Cardiac septum (tissue), 1 donor: ENCODE measurements at regions of chr14 and their contacts with region 1.

Region 1: GRCh38 chr14:64986578-64987571 is at the start of gene FNTB:
- DNase-seq: peak; percentile 99
- total RNA-seq, gene FNTB: 18.7 TPM

Region 2: DNA sequence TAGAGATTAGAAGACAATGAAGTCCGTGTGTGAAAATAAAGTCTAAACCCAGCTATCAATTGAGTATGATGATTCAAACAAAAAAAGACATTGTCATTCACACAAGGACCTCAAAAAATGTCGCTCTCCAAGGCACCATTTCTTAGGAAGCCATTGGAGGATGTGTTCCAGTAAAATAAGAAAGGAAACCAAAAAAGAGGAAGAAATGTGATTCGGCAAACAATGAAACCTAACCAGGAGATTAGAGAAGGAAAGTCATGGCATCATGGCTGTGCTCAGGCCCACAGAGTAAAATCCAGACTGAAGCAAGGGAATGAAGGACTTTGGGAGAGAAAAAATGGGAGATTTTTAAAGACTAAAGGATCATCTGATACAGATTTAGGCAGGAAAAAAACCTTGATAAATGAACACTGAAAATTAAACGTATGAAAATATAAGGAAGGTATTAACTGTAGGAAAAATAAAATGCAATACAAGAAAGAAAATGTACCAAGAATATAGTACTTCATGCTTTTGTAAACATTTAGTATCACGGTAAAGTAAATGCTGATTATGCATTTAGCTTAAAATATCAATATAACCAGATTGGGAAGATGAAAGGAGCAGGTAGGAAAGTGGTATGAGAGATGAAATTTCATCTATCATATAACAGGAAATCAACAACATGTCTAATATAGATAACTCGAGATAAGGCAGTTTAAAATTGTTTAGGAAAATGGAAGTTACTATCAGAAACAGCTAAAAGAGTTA is 637.0 kb before region 1 on chr14:
- intact Hi-C with region 1: no loop called
- DNase-seq: no peak

Region 3: DNA sequence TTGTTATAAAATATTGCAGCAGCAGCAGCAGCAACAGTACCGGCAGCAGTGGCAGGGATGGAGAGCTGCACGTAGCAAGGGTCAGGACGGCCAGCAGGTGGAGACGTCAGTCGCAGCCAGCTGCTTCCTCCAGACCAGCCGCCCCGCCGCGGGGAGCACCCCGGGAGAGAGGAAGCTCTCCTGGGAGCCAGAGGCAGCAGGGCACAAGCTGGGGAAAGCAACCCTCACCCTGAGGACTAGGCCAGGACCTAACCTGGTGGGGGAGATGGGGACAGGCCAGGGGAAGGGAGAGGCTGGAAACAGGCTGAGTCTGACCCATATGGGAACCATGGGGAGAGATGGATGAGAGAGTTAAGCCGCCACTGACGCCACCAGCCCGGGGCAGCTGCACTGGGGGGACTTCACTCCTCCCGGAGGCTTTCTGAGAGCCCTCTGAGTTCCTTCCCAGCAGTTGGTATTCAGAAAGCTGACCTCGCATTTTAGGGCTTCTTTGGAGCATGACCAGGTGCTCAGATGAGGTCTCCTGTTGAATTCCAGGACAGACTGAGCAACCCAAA is 163.5 kb before region 1 on chr14:
- intact Hi-C with region 1: loop called (anchors 5 kb)
- DNase-seq: peak; percentile 89

Region 4: GRCh38 chr14:65019944-65020566 is 33.2 kb after region 1 on chr14:
- intact Hi-C with region 1: loop called (anchors 2 kb)
- DNase-seq: no peak

Region 5: GRCh38 chr14:65102441-65103149 is 115.7 kb after region 1 on chr14 and contains the start of gene MAX:
- intact Hi-C with region 1: loop called (anchors 2 kb)
- DNase-seq: peak; percentile 100
- total RNA-seq, gene MAX: 80.8 TPM